Activated T-helper 2 cell treated with anti-CD3 and anti-CD28 coated beads, Interferon-gamma antibody, Interleukin-2, Interleukin-4, amounts not matched to agents 10 μg/mL and 5 μg/mL and 100 μg/mL, durations not matched to agents 14 hours and 24 hours and 36 hours (primary cell): ENCODE measurements at regions of chr10 and their contacts with region 1.

Region 1: DNA sequence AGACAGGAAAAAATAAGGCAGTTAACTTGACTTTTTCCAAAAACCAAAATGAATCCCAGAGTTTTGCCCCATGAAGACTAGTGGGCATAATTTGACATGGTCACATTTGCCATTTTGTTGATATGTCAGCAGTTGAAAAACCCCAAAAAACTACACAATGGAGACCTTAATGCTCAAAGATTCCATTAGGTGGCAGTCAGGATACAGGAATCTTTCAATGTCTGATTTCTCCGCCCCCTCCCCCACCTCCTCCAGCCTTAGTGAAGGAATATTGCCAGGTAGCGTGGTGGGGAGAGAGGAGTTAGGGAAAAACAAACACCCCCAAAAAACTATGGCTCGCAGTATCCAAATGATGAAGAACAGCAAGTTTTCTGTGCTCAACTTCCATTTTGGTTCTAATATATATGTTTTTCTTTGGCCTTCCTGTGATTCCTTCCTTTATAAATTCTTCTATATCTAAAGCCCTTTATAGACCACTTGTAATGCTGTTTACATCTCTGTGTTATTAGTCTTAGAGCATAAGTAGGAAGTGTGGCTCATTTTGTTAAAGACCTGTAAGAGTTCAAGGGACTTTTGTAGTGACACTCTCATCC is 6.7 kb upstream of the SMNDC1 start:
- DNase-seq: no peak
- H3K4me3 Mint-ChIP-seq: no peak overlapping the region
- H3K27ac Mint-ChIP-seq: no peak overlapping the region
- H3K4me1 Mint-ChIP-seq: peaks cover 33% of the 10 kb centered on the region
- H3K27me3 Mint-ChIP-seq: no peaks in the 10 kb centered on the region

Region 2: GRCh38 chr10:110285501-110285900 is 26.0 kb before region 1 on chr10:
- intact Hi-C with region 1: no loop called
- DNase-seq: no peak
- H3K4me3 Mint-ChIP-seq: no peak overlapping the region
- H3K27ac Mint-ChIP-seq: no peak overlapping the region
- H3K4me1 Mint-ChIP-seq: no peaks in the 10 kb centered on the region
- H3K27me3 Mint-ChIP-seq: no peaks in the 10 kb centered on the region

Region 3: DNA sequence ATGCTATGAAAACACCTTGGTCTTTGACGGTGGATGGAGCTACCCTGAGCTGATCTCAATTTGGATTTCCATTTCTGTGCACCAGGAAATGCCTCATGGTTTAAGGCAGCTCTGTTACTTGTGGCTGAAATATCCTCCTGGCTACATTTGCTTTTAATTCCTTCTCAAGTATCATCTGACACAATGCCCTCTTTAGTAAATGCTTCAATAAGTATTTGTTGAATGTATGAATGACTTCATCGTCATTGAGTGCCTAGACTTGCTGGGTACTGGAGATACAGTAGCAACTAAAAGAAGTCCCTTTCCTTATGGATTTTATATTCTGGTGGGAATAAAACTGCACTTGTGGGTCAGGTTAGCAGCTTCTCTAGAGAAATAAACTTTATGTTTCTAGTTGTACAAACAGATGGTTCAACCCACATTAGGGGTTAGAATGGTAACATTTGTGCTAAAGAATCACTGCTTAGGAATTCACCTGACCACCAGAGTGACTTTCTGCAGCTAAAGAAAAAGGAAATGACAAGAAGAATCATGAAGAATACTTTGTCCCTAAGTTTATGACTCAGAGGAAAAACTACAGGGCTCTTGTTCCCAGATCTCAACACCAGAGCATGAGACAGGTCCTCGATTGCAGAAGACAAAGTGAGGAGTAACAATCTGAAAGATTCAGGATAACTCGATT is 15.0 kb after region 1 on chr10:
- intact Hi-C with region 1: loop called (anchors 2 kb)
- DNase-seq: no peak
- H3K4me3 Mint-ChIP-seq: no peak overlapping the region
- H3K27ac Mint-ChIP-seq: peak overlapping the region; percentile 12
- H3K4me1 Mint-ChIP-seq: peaks cover 46% of the 10 kb centered on the region
- H3K27me3 Mint-ChIP-seq: no peaks in the 10 kb centered on the region

Region 4: DNA sequence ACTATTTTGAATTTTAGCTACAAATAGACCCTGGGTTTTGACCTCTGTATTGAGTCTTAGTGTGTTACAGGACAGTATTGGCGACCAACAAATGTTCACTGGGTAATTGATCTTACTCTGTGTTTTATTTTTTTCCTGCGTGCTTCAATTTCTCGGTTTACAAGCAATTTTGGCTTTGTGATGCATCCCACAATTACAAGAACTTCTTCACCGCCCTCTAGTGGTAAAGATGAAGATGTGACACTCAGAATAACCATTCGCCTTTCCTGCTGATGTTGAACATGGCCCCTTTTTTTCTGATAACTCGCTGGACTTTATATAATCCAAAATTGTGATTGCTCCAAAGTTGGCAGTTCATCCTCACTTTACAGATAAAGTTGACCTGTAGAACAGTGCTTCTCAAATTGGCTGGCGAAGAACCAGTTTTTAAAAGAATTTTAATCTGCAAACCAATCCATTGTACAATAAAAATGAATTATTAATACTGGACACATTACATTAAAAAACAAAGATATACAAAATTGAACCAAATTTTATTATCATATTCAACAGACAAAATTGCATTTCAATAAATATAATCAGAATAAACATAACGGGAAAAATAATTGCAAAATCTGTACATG is 235.8 kb after region 1 on chr10:
- intact Hi-C with region 1: loop called (anchors 1 kb)
- DNase-seq: no peak
- H3K4me3 Mint-ChIP-seq: no peak overlapping the region
- H3K27ac Mint-ChIP-seq: no peak overlapping the region
- H3K4me1 Mint-ChIP-seq: peaks cover 12% of the 10 kb centered on the region
- H3K27me3 Mint-ChIP-seq: peaks cover 28% of the 10 kb centered on the region